Caco-2 (cell line): ENCODE measurements at regions of chr10 and their contacts with region 1.

Region 1: DNA sequence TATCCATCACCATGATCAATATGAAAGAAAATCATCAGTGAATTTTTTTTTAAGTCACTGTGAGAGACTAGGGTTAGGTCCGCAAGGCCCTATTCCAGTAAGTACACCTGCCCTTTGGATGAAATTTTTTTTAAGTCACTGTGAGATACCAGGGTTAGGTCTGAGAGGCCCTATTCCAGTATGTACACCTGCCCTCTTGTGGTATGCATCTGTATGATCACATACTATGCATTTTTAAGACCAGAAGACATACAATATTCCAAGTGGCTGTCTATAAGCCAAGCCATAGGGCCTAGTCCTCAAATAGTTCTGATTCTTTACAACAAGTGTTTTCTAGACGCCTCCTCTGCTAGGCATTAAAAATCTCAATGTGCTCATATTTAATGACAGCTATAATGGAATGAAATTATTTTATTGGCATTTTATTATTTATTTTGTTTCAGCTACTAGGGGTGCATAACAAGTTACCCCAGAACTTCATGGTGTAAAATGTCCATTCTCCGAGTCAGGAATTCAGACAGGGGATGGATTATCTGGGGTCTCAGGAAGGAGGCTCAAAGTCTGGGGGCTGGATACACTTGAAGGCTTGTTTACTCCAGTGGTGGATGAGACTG is 53.1 kb downstream of the TEX36 start:
- DNase-seq: peak in 1 of 2 experiments; percentile 57
- H3K4me3 ChIP-seq: no peak overlapping the region
- H3K4me3 Mint-ChIP-seq: no peak overlapping the region
- H3K27ac Mint-ChIP-seq: no peak overlapping the region
- H3K4me1 ChIP-seq: no peaks in the 10 kb centered on the region
- H3K4me1 Mint-ChIP-seq: no peaks in the 10 kb centered on the region
- H3K27me3 ChIP-seq: no peaks in the 10 kb centered on the region
- H3K27me3 Mint-ChIP-seq: peaks cover 25% of the 10 kb centered on the region
- CTCF ChIP-seq: peak; percentile 59 to 74

Region 2: GRCh38 chr10:125521721-125522680 is 107.9 kb before region 1 on chr10:
- CTCF ChIA-PET with region 1: no interaction called
- POLR2A ChIA-PET with region 1: no interaction called
- intact Hi-C with region 1: loop called (anchors 10 kb)
- DNase-seq: peak; percentile 52 to 66
- H3K4me3 ChIP-seq: no peak overlapping the region
- H3K4me3 Mint-ChIP-seq: no peak overlapping the region
- H3K27ac Mint-ChIP-seq: no peak overlapping the region
- H3K4me1 ChIP-seq: no peaks in the 10 kb centered on the region
- H3K4me1 Mint-ChIP-seq: no peaks in the 10 kb centered on the region
- H3K27me3 ChIP-seq: no peaks in the 10 kb centered on the region
- H3K27me3 Mint-ChIP-seq: peaks cover 7% of the 10 kb centered on the region
- CTCF ChIP-seq: peak; percentile 75 to 85

Region 3: GRCh38 chr10:125599194-125599593 is 30.7 kb before region 1 on chr10:
- CTCF ChIA-PET with region 1: no interaction called
- POLR2A ChIA-PET with region 1: no interaction called
- intact Hi-C with region 1: no loop called
- DNase-seq: no peak
- H3K4me3 ChIP-seq: no peak overlapping the region
- H3K4me3 Mint-ChIP-seq: no peak overlapping the region
- H3K27ac Mint-ChIP-seq: no peak overlapping the region
- H3K4me1 ChIP-seq: no peaks in the 10 kb centered on the region
- H3K4me1 Mint-ChIP-seq: no peaks in the 10 kb centered on the region
- H3K27me3 ChIP-seq: no peaks in the 10 kb centered on the region
- H3K27me3 Mint-ChIP-seq: peaks cover 5% of the 10 kb centered on the region
- CTCF ChIP-seq: no peak

Region 4: GRCh38 chr10:125684581-125684980 is 54.7 kb after region 1 on chr10:
- CTCF ChIA-PET with region 1: no interaction called
- POLR2A ChIA-PET with region 1: no interaction called
- intact Hi-C with region 1: no loop called
- DNase-seq: no peak
- H3K4me3 ChIP-seq: no peak overlapping the region
- H3K4me3 Mint-ChIP-seq: no peak overlapping the region
- H3K27ac Mint-ChIP-seq: no peak overlapping the region
- H3K4me1 ChIP-seq: no peaks in the 10 kb centered on the region
- H3K4me1 Mint-ChIP-seq: no peaks in the 10 kb centered on the region
- H3K27me3 ChIP-seq: no peaks in the 10 kb centered on the region
- H3K27me3 Mint-ChIP-seq: peaks cover 31% of the 10 kb centered on the region
- CTCF ChIP-seq: no peak